ENCODE measurements at regions of chr3 and their contacts with region 1.

Region 1: GRCh38 chr3:140552898-140553297 is 125.0 kb upstream of the TRIM42 start:
- DNase-seq: no peak
- ATAC-seq: peak; percentile 85

Region 2: GRCh38 chr3:140736863-140737460 is 184.1 kb after region 1 on chr3:
- intact Hi-C with region 1: loop called (anchors 5 kb)
- DNase-seq: peak; percentile 77
- ATAC-seq: peak; percentile 89

Measured in Right ventricle myocardium superior (tissue), 1 donor.